Activated T-helper 2 cell treated with anti-CD3 and anti-CD28 coated beads, Interferon-gamma antibody, Interleukin-2, Interleukin-4, amounts not matched to agents 10 μg/mL and 5 μg/mL and 100 μg/mL, durations not matched to agents 14 hours and 24 hours and 36 hours (primary cell): ENCODE measurements at regions of chr13 and their contacts with region 1.

Region 1: DNA sequence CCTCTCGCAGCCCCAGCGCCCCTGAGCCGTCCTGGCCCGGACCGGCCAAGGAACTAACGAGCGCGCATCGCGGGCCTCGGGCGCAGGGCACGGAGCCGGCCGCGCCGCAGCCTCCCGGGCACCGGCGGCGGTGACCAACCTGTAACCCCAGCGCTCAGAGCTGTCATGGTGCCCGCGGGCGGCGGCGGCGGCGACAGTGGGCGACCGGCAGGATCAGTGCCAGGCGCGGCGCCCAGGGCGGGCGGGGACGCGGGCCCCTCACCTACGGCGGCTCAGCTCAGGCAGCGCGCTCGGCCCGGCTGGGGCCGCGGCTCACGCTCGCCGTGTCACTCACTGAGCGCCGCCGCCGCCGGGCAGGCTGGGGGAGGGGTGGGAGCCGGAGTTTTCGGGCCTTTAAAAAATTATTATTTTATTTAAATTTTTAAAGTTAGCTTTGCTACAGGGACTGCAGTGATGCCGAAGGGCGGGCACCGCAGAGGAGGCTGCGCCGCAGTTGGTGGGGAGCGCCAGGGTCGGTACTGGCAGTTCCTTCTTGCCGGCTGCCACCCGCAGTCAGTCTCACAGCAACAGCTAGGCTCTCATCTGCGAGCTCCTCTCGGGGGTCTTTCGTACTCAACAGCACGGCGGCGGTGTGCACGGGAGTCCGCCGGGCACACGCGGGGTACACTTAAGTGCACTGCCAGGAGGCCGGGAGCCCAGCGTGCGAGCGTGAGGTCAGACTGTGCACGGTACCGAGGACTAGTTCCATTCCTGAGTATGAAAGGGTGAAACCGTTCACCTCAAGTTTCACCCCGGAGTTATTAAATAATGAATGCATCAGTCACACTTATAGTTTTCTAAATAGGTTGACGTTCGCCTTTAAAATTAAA is at the start of gene NALCN:
- DNase-seq: no peak
- H3K4me3 Mint-ChIP-seq: no peak within 1 kb of the TSS
- H3K27ac Mint-ChIP-seq: no peak within 1 kb of the TSS
- H3K4me1 Mint-ChIP-seq: no peaks in the 10 kb centered on the region
- H3K27me3 Mint-ChIP-seq: peaks cover 31% of the 10 kb centered on the region
- total RNA-seq, gene NALCN: not detected in 2 replicates

Region 2: GRCh38 chr13:101916108-101916757 is 499.8 kb after region 1 on chr13:
- intact Hi-C with region 1: loop called (anchors 10 kb)
- DNase-seq: no peak
- H3K4me3 Mint-ChIP-seq: no peak overlapping the region
- H3K27ac Mint-ChIP-seq: no peak overlapping the region
- H3K4me1 Mint-ChIP-seq: no peaks in the 10 kb centered on the region
- H3K27me3 Mint-ChIP-seq: peaks cover 54% of the 10 kb centered on the region